Activated CD4-positive, alpha-beta memory T cell treated with anti-CD3 and anti-CD28 coated beads for 36 hours (primary cell): ENCODE measurements at regions of chr2 and their contacts with region 1.

Region 1: DNA sequence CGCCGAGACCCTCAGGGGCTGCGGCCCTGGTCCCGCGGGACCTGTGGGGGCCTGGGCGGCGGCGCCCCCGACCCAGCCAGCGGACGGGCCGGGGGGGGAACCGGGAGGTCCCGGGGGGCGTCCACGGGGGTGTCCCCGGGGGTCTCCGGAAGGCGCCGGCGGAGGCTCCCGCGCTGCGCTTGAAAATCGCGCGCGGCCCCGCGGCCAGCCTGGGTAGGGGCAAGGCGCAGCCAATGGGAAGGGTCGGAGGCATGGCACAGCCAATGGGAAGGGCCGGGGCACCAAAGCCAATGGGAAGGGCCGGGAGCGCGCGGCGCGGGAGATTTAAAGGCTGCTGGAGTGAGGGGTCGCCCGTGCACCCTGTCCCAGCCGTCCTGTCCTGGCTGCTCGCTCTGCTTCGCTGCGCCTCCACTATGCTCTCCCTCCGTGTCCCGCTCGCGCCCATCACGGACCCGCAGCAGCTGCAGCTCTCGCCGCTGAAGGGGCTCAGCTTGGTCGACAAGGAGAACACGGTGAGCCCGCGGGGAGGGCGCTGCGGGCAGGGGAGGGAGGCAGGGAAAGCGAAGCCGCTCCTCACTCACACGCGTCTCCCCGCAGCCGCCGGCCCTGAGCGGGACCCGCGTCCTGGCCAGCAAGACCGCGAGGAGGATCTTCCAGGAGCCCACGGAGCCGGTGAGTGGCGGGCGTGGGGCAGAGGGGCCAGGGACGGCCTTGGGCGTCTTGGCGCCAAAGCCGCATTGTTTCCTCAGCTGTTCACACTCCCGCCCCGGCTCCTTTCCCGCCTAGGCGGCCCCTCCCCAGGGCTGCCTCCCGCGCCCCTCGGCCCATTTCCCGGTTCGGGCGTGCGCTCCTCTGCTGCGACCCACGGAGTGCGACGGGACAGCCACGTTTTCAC is at the start of gene RRM2:
- DNase-seq: peak; percentile 97
- H3K4me3 Mint-ChIP-seq: peak within 1 kb of the TSS; percentile 97
- H3K27ac Mint-ChIP-seq: peak within 1 kb of the TSS; percentile 97
- H3K4me1 Mint-ChIP-seq: peaks cover 49% of the 10 kb centered on the region
- H3K27me3 Mint-ChIP-seq: peaks cover 3% of the 10 kb centered on the region
- total RNA-seq, gene RRM2: 523 to 528 TPM

Region 2: GRCh38 chr2:9708683-9709538 is 413.7 kb before region 1 on chr2:
- CTCF ChIA-PET with region 1: no interaction called
- POLR2A ChIA-PET with region 1: no interaction called
- intact Hi-C with region 1: loop called (anchors 5 kb)
- DNase-seq: peak; percentile 80
- H3K4me3 Mint-ChIP-seq: no peak overlapping the region
- H3K27ac Mint-ChIP-seq: peak overlapping the region; percentile 93
- H3K4me1 Mint-ChIP-seq: peaks cover 63% of the 10 kb centered on the region
- H3K27me3 Mint-ChIP-seq: no peaks in the 10 kb centered on the region

Region 3: GRCh38 chr2:10072656-10073480 is 49.8 kb before region 1 on chr2:
- CTCF ChIA-PET with region 1: interaction called, 23 read pairs
- POLR2A ChIA-PET with region 1: no interaction called
- intact Hi-C with region 1: loop called (anchors 1 kb)
- DNase-seq: peak; percentile 86
- H3K4me3 Mint-ChIP-seq: no peak overlapping the region
- H3K27ac Mint-ChIP-seq: no peak overlapping the region
- H3K4me1 Mint-ChIP-seq: peaks cover 4% of the 10 kb centered on the region
- H3K27me3 Mint-ChIP-seq: peaks cover 37% of the 10 kb centered on the region

Region 4: DNA sequence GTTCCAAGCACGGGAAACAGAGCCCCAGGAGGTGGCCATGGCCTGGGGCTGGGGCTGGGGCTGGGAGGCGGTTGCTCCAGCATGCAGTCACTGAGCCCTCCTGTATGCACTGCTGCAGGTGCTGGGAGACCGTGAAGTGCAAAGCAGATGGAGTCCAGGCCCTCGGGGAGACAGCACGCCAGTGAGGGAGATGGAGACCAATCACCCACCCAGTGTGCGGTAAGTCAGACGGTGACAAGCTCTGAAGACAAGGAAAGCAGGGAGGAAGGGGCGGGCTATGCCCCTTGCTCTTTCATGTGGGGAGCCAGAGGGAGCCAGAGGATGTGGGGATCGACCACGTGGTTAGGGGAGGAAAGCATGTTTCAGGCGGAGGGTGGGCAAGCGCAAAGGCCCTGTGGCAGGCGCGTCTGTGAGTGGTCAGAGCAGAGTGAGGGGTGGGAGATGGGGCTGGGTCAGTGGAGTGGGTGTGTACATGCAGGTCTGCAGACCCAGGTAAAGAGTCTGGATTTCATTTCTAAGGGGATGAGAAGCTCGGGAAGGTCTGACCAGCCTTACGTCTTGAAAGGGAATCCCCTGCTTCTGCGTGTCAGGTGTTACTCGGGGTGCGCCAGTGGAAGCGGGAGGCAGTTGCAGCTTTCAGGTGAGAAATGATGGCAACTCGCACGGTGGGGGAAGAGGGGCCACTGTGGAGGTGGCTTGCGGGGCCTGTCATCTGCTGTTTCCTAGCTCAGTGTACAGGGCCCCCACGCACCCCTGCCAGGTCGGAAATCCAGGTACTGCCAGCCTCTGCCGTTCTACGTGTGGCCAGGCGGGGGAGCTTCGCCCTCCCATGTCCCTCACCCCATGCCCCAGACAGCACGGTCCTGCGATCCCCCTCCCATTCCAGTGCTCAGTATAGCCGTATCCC is 19.4 kb after region 1 on chr2:
- CTCF ChIA-PET with region 1: interaction called, 19 read pairs
- POLR2A ChIA-PET with region 1: interaction called, 6 read pairs
- intact Hi-C with region 1: no loop called
- DNase-seq: peak; percentile 43
- H3K4me3 Mint-ChIP-seq: no peak overlapping the region
- H3K27ac Mint-ChIP-seq: no peak overlapping the region
- H3K4me1 Mint-ChIP-seq: peaks cover 13% of the 10 kb centered on the region
- H3K27me3 Mint-ChIP-seq: no peaks in the 10 kb centered on the region

Region 5: GRCh38 chr2:10285556-10286198 is 163.0 kb after region 1 on chr2:
- CTCF ChIA-PET with region 1: no interaction called
- POLR2A ChIA-PET with region 1: no interaction called
- intact Hi-C with region 1: no loop called
- DNase-seq: no peak
- H3K4me3 Mint-ChIP-seq: no peak overlapping the region
- H3K27ac Mint-ChIP-seq: no peak overlapping the region
- H3K4me1 Mint-ChIP-seq: peaks cover 7% of the 10 kb centered on the region
- H3K27me3 Mint-ChIP-seq: no peaks in the 10 kb centered on the region

Region 6: DNA sequence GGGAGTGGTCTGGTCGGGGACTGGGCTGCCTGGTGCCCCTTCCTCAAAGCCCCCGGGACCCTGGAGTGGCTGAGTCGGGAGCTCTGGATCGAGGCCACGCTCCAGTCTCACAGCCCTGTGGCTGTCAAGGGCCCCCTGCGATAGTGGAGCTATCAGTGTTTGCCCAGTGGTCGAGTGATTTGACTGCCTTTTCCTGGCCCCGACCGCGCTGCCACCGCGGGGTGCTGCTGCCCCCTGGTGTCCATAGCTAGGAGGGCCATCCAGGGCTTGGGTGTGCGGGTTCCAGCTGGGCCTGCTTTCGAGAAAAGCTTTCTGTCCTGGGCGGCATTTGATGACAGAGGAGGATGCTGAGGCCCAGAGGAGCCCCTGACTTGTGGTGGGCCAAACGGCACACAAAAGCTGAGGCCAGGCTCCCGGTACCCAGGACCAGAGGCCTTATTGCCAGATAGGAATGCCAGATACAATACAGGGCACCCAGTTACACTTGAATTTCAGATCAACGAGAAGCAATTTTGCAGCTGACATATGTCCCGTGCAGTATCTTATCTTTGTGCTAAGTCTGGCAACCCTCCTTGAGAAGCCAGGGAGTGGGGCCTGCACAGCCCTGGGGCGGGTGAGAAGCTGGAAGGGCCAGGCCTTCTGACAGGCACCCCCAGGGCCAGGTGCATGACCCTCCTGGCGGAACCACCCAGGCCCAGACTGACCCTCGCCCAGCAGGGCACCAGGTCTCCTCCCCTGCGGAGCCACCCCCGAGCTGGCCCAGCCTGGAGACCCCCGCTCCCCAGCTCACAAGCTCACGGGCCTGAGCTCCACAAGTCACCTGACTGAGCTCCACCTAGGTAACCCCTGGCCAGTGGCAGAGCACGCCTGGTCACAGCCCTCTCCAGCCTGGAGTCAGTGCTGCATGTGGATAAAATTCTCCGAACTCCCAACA is 312.5 kb after region 1 on chr2:
- CTCF ChIA-PET with region 1: interaction called, 79 read pairs
- POLR2A ChIA-PET with region 1: interaction called, 8 read pairs
- intact Hi-C with region 1: loop called (anchors 1 kb)
- DNase-seq: peak; percentile 80
- H3K4me3 Mint-ChIP-seq: no peak overlapping the region
- H3K27ac Mint-ChIP-seq: no peak overlapping the region
- H3K4me1 Mint-ChIP-seq: peaks cover 12% of the 10 kb centered on the region
- H3K27me3 Mint-ChIP-seq: peaks cover 13% of the 10 kb centered on the region

Region 7: GRCh38 chr2:10654069-10654468 is 531.4 kb after region 1 on chr2:
- CTCF ChIA-PET with region 1: no interaction called
- POLR2A ChIA-PET with region 1: no interaction called
- intact Hi-C with region 1: loop called (anchors 1 kb)
- DNase-seq: peak; percentile 85
- H3K4me3 Mint-ChIP-seq: no peak overlapping the region
- H3K27ac Mint-ChIP-seq: peak overlapping the region; percentile 80
- H3K4me1 Mint-ChIP-seq: peaks cover 44% of the 10 kb centered on the region
- H3K27me3 Mint-ChIP-seq: no peaks in the 10 kb centered on the region